CD14-positive monocyte (primary cell): ENCODE measurements at regions of chr11 and their contacts with region 1.

Region 1: GRCh38 chr11:129117595-129118350 is 74.4 kb downstream of the ARHGAP32 start:
- DNase-seq: peak; percentile 29 to 53 (median 40)
- H3K4me3 ChIP-seq: no peak overlapping the region
- H3K4me3 Mint-ChIP-seq: no peak overlapping the region
- H3K27ac ChIP-seq: no peak overlapping the region
- H3K27ac Mint-ChIP-seq: no peak overlapping the region
- H3K4me1 ChIP-seq: no peaks in the 10 kb centered on the region
- H3K4me1 Mint-ChIP-seq: no peaks in the 10 kb centered on the region
- H3K27me3 ChIP-seq: no peaks in the 10 kb centered on the region
- H3K27me3 Mint-ChIP-seq: no peaks in the 10 kb centered on the region
- CTCF ChIP-seq: peak; percentile 86

Region 2: GRCh38 chr11:129006161-129006560 is 111.6 kb before region 1 on chr11:
- intact Hi-C with region 1: no loop called
- DNase-seq: no peak
- H3K4me3 ChIP-seq: no peak overlapping the region
- H3K4me3 Mint-ChIP-seq: no peak overlapping the region
- H3K27ac ChIP-seq: no peak overlapping the region
- H3K27ac Mint-ChIP-seq: no peak overlapping the region
- H3K4me1 ChIP-seq: no peaks in the 10 kb centered on the region
- H3K4me1 Mint-ChIP-seq: no peaks in the 10 kb centered on the region
- H3K27me3 ChIP-seq: no peaks in the 10 kb centered on the region
- H3K27me3 Mint-ChIP-seq: no peaks in the 10 kb centered on the region
- CTCF ChIP-seq: no peak

Region 3: DNA sequence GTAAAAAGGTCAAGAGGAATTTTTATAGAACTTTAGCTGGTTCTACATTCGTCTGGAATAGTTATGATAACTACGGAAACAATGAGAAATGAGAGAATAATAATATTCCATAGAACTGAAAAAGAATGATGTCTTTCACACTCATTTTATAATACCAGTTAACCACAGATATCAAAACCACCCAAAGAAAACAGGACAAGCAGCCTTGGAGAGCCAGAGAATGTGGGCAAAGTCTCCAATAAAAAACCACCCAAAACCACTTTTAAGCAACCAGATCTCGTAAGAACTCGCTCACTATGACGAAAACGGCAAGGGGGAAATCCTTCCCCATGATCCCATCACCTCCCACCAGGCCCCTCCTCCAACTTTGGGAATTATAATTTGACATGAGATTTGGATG is 13.5 kb after region 1 on chr11:
- intact Hi-C with region 1: no loop called
- DNase-seq: no peak
- H3K4me3 ChIP-seq: no peak overlapping the region
- H3K4me3 Mint-ChIP-seq: no peak overlapping the region
- H3K27ac ChIP-seq: no peak overlapping the region
- H3K27ac Mint-ChIP-seq: no peak overlapping the region
- H3K4me1 ChIP-seq: no peaks in the 10 kb centered on the region
- H3K4me1 Mint-ChIP-seq: no peaks in the 10 kb centered on the region
- H3K27me3 ChIP-seq: no peaks in the 10 kb centered on the region
- H3K27me3 Mint-ChIP-seq: peaks cover 0 to 2% (median 0%) of the 10 kb centered on the region in 3 donors
- CTCF ChIP-seq: no peak

Region 4: DNA sequence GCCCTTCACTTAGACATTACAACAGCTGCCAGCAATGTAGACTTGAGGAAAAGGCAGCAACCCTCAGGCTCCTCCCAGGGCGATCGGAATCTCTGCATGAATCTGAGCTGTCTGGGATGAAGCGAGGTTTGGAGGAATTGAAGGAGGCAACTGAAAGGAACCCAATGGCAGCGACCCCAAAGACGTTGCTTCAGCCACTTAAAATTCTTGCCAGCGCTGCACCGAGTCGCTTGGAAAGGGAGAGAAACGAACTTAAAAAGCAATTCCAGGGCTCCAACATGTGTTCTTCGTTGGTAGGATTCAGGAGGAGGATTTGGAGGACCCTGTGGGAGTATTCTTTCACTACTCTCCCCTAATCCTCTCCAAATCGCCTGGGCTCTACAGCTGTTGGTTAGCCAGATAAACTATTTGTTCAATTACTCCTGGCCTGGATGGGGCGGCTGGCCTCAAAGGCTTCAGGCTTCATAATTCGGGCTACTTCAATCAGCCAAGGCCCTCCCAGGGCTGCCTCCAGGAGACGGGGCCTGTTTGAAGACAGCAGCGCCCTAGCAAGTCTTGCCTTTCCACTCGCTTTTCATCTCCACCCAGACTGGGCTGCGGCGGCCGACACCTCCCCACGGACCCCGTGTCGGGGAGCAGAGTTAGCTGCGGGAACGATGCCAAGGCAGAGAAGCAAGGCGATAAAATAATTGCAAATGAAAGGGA is 625.5 kb after region 1 on chr11:
- intact Hi-C with region 1: loop called in 1 of 2 experiments (anchors 10 kb)
- DNase-seq: no peak
- H3K4me3 ChIP-seq: no peak overlapping the region
- H3K4me3 Mint-ChIP-seq: no peak overlapping the region
- H3K27ac ChIP-seq: no peak overlapping the region
- H3K27ac Mint-ChIP-seq: peak overlapping the region in 1 of 7 donors; percentile 12
- H3K4me1 ChIP-seq: no peaks in the 10 kb centered on the region
- H3K4me1 Mint-ChIP-seq: no peaks in the 10 kb centered on the region
- H3K27me3 ChIP-seq: peaks cover 0 to 6% of the 10 kb centered on the region in 2 donors
- H3K27me3 Mint-ChIP-seq: peaks cover 9 to 29% (median 22%) of the 10 kb centered on the region in 3 donors
- CTCF ChIP-seq: no peak